Naive thymus-derived CD4-positive, alpha-beta T cell (primary cell): ENCODE measurements at regions of chr6 and their contacts with region 1.

Region 1: DNA sequence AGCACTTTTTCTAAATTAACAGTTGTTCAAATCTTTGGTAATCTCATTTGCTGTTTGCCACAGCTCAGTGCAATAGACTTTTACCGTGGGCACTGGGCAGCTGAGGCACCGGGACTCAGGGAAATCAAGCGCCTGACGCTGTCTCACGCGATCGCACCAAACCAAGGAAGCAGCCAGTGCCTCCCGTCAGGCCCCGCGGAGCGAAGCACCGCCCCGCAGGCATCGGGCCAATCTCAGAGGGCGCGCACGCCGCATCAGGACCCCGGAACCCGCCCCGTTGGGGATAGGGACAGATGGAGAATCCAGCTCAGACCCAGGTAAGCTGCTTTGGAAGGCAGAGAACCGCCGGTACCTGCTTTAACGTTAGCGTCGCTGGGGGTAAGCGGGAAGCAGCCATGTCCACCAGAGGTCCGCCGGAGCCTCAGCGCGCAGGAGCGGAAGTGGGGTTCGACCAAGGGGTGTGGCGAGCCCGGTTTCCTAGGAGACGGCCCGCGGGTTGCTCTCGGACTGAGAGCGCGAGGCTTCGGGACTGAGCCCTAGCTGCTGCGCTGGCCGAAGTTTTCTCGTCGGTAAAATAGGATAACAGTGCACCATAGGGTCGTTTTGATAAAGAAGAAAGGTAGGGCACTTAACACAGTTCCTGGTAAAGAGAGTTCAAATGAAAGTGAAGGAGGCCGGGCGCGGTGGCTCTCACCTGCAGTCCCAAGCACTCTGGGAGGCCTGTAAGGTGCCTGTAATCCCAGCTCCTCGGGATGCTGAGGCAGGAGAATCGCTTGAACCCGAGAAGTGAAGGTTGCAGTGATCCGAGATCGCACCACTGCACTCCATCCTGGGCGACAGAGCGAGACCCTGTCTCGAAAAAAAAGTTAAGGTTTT is at the start of gene LYRM2:
- DNase-seq: peak; percentile 85 to 93 (median 91)
- ATAC-seq: peak; percentile 97
- H3K4me3 ChIP-seq: peak within 1 kb of the TSS; percentile 99
- H3K4me3 Mint-ChIP-seq: peak within 1 kb of the TSS; percentile 90 to 98 (median 94)
- H3K27ac ChIP-seq: peak within 1 kb of the TSS; percentile 91
- H3K27ac Mint-ChIP-seq: peak within 1 kb of the TSS; percentile 96 to 99 (median 99)
- H3K4me1 ChIP-seq: peaks cover 9 to 15% of the 10 kb centered on the region in 2 donors
- H3K4me1 Mint-ChIP-seq: peaks cover 6 to 45% (median 27%) of the 10 kb centered on the region in 7 donors
- H3K27me3 ChIP-seq: no peaks in the 10 kb centered on the region
- H3K27me3 Mint-ChIP-seq: peaks cover 0 to 3% (median 0%) of the 10 kb centered on the region in 5 donors
- total RNA-seq, gene LYRM2: 18.1 to 40.7 (median 32.0) TPM

Region 2: DNA sequence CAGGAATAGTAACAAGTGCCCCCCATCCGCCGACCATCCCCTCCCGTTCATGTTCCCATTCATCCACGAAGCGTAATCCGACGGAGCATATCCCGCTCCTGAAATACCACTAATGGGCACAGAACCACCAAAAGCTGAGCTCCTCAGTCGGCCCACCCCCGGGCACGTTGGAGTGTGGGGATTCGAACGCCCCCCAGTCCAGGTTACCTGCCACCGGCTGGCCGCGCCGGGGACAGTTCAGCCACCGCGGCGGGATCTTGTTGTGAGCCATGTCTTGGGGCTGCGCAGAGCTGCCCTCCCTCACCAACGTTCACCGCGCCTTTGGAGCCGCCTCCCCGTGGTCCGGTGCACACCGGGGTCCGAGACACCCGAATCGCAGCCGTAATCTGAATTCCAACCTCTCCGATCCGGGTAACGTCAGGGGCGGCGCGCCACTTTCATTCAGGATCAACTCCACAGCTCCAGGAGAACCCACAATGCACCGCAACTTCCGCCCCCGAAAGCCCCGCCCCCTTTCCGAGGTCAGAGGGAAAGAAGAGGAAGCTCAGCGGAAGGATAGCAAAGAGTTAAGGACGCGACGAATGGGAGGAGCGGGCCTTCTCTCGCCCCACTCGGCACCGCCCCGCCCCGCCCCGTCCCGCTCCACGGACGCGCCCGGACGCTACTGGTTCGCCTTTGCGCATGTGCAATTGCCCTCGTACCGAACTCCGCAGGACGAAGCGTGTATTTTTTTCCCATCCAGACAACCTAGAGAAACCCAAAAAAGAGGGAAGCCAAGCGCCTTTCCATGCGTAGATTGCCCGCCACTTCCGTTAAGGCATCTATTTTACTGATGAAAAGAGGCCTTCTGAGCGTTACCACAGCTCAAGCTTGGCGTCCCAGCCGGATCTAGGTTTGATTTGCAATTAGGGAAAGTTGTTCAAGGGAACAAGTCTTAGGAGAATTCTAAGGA is 675.1 kb before region 1 on chr6 and contains the start of gene RNGTT:
- CTCF ChIA-PET with region 1: no interaction called
- POLR2A ChIA-PET with region 1: interaction called, 5 read pairs
- intact Hi-C with region 1: loop called (anchors 1 kb)
- DNase-seq: peak; percentile 89 to 98 (median 95)
- ATAC-seq: peak; percentile 100
- H3K4me3 ChIP-seq: peak within 1 kb of the TSS; percentile 82
- H3K4me3 Mint-ChIP-seq: peak within 1 kb of the TSS; percentile 91 to 99 (median 98)
- H3K27ac ChIP-seq: peak within 1 kb of the TSS; percentile 82
- H3K27ac Mint-ChIP-seq: peak within 1 kb of the TSS; percentile 85 to 97 (median 94)
- H3K4me1 ChIP-seq: peaks cover 9 to 18% of the 10 kb centered on the region in 2 donors
- H3K4me1 Mint-ChIP-seq: peaks cover 25 to 57% (median 52%) of the 10 kb centered on the region in 7 donors
- H3K27me3 ChIP-seq: no peaks in the 10 kb centered on the region
- H3K27me3 Mint-ChIP-seq: peaks cover 0 to 2% (median 0%) of the 10 kb centered on the region in 5 donors
- total RNA-seq, gene RNGTT: 15.4 to 26.5 (median 20.8) TPM

Region 3: DNA sequence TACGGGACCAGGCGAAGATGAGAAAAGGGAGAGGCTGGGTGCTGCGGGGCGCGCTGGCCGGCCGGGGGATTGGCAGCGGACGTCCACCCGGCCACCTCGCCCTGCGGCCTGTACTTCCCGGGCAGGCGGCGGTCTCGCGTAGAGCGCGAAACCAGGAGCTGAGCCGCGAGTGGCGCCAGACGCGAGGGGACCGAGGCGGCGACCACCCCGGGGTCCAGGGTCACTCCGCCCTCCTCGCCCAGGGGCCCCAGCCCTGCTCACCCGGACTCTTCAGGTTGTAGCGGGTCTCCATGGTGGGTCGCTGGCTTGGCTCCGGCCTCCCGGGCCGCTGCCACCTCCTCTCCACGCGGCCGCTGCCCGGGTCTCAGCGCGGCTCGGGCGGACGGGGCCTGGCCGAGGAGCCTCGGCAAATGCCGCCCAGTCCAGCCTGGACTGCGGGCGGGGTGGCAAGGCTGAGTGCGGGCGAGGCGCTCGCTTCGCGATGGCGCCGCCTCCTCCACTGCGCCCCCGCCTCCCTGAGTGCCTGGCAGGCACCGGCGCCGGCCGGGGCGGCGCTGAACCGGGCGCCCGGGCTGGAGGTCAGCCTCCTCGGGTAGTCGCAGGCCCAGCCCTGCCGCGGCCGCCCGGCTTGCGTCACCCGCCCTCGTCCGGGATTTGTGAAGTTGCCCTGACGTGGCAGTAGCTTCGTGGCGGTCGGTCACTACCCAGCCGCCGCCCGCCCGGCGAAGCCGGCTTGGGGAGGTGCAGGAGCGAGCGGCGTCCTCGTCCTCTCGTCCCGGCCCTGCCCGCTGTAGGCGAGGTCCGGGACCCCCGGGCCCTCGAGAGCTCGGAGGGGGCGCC is 286.1 kb before region 1 on chr6 and contains the start of gene UBE2J1:
- CTCF ChIA-PET with region 1: no interaction called
- POLR2A ChIA-PET with region 1: interaction called, 3 read pairs
- intact Hi-C with region 1: loop called (anchors 1 kb)
- DNase-seq: peak; percentile 34 to 87 (median 61)
- ATAC-seq: peak; percentile 89
- H3K4me3 ChIP-seq: peak within 1 kb of the TSS; percentile 67
- H3K4me3 Mint-ChIP-seq: peak within 1 kb of the TSS; percentile 96 to 100 (median 98)
- H3K27ac ChIP-seq: peak within 1 kb of the TSS; percentile 88
- H3K27ac Mint-ChIP-seq: peak within 1 kb of the TSS; percentile 95 to 98 (median 97)
- H3K4me1 ChIP-seq: peaks cover 27 to 30% of the 10 kb centered on the region in 2 donors
- H3K4me1 Mint-ChIP-seq: peaks cover 44 to 81% (median 72%) of the 10 kb centered on the region in 7 donors
- H3K27me3 ChIP-seq: no peaks in the 10 kb centered on the region
- H3K27me3 Mint-ChIP-seq: no peaks in the 10 kb centered on the region
- total RNA-seq, gene UBE2J1: 18.8 to 47.7 (median 27.7) TPM

Region 4: DNA sequence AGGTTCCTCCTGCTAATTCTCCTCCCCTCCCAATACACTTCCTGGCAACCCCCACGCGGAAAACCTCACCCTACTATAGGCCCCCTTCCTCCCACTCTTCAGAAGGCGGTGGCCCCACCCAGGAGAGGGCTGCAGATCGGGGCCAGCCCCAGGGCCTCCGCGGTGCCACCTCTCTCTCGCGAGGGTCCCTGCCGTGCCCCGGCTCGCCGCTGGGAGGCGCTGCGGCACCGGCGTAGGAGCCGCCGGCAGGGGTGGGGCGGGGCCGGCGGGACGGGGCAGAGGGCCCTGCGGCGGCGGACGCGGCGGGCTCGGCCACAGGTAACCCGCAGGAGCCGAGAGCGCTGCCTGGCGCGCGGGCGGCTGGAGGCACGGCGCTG is 205.7 kb before region 1 on chr6 and contains the start of gene ANKRD6:
- CTCF ChIA-PET with region 1: interaction called, 5 read pairs
- POLR2A ChIA-PET with region 1: no interaction called
- intact Hi-C with region 1: loop called (anchors 1 kb)
- DNase-seq: peak; percentile 61 to 96 (median 81)
- ATAC-seq: peak; percentile 98
- H3K4me3 ChIP-seq: peak within 1 kb of the TSS; percentile 63
- H3K4me3 Mint-ChIP-seq: peak within 1 kb of the TSS; percentile 83 to 95 (median 90)
- H3K27ac ChIP-seq: peak within 1 kb of the TSS; percentile 46
- H3K27ac Mint-ChIP-seq: peak within 1 kb of the TSS; percentile 43 to 93 (median 82)
- H3K4me1 ChIP-seq: peaks cover 7 to 13% of the 10 kb centered on the region in 2 donors
- H3K4me1 Mint-ChIP-seq: peaks cover 9 to 36% (median 22%) of the 10 kb centered on the region in 7 donors
- H3K27me3 ChIP-seq: no peaks in the 10 kb centered on the region
- H3K27me3 Mint-ChIP-seq: peaks cover 0 to 58% (median 0%) of the 10 kb centered on the region in 5 donors
- total RNA-seq, gene ANKRD6: 3.1 to 6.6 (median 3.8) TPM

Region 5: GRCh38 chr6:89610149-89610642 is 28.4 kb before region 1 on chr6:
- CTCF ChIA-PET with region 1: interaction called, 8 read pairs
- POLR2A ChIA-PET with region 1: interaction called, 3 read pairs
- intact Hi-C with region 1: loop called in 1 of 2 experiments (anchors 1 kb)
- DNase-seq: peak; percentile 34 to 75 (median 65)
- ATAC-seq: peak; percentile 91
- H3K4me3 ChIP-seq: no peak overlapping the region
- H3K4me3 Mint-ChIP-seq: no peak overlapping the region
- H3K27ac ChIP-seq: no peak overlapping the region
- H3K27ac Mint-ChIP-seq: no peak overlapping the region
- H3K4me1 ChIP-seq: no peaks in the 10 kb centered on the region
- H3K4me1 Mint-ChIP-seq: peaks cover 0 to 17% (median 0%) of the 10 kb centered on the region in 7 donors
- H3K27me3 ChIP-seq: no peaks in the 10 kb centered on the region
- H3K27me3 Mint-ChIP-seq: no peaks in the 10 kb centered on the region

Region 6: DNA sequence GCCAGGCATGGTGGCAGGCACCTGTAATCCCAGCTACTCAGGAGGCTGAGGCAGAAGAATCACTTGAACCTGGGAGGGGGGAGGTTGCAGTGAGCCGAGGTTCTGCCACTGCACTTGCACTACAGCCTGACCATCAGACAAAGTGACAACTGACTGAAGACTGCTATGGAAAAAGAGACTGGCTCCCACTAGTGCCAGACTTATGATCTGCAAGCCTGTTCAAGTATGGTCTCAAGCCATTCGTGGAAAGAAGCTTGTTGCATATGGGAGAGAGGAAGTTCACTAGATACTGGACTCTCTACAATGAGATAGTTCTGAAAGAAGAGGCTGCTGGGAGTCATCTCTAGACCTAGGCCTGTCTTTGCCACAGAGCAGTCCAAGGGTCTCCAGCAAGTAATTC is 154.3 kb after region 1 on chr6:
- CTCF ChIA-PET with region 1: no interaction called
- POLR2A ChIA-PET with region 1: no interaction called
- intact Hi-C with region 1: no loop called
- DNase-seq: no peak
- ATAC-seq: peak; percentile 71
- H3K4me3 ChIP-seq: no peak overlapping the region
- H3K4me3 Mint-ChIP-seq: peak overlapping the region in 8 of 10 donors; percentile 1 to 79 (median 46)
- H3K27ac ChIP-seq: no peak overlapping the region
- H3K27ac Mint-ChIP-seq: peak overlapping the region in 3 of 9 donors; percentile 59 to 82 (median 65)
- H3K4me1 ChIP-seq: peaks cover 16 to 21% of the 10 kb centered on the region in 2 donors
- H3K4me1 Mint-ChIP-seq: peaks cover 27 to 33% (median 30%) of the 10 kb centered on the region in 7 donors
- H3K27me3 ChIP-seq: no peaks in the 10 kb centered on the region
- H3K27me3 Mint-ChIP-seq: no peaks in the 10 kb centered on the region

Region 7: DNA sequence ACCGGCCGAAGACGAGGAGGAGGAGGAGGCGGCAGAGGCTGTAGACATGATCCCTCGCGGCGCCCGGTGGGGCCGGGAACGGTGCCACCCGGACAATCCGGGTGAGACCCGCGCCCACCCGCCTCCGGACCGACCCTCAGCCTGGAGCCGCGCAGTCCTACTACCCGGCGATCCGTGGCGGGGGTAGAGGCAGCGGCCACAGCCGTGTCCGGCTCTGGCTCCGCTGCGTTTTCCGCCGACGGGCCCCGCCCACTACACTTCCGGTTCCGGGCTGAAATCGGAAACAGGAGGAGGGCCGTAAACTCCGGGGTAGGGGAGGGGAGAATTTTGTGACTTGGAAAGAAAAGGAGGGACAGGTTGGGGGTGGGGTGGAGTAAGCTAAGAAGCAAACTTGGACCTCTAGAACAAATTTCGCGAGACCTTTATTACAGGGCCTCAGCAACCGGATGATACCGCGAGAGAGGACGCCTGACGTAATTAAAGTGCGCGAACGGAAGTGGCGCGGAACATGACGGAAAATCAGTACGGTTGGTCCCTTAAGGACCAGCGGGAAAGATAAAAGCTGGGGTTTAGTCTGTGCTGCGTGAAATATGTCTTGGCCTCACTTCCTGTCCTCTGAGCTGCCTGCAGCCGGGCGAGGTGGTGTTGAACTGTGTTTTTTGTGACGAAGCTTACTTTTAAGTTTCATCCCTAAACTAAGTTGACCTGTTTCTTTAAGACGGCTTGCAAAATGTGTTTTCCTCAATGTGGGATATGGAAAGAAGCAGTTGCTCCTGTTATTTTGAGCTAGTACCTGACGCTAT is 948.5 kb after region 1 on chr6 and contains the start of gene MAP3K7:
- CTCF ChIA-PET with region 1: no interaction called
- POLR2A ChIA-PET with region 1: no interaction called
- intact Hi-C with region 1: loop called (anchors 1 kb)
- DNase-seq: peak; percentile 83 to 96 (median 93)
- ATAC-seq: peak; percentile 90
- H3K4me3 ChIP-seq: peak within 1 kb of the TSS; percentile 88
- H3K4me3 Mint-ChIP-seq: peak within 1 kb of the TSS; percentile 92 to 99 (median 96)
- H3K27ac ChIP-seq: peak within 1 kb of the TSS; percentile 93
- H3K27ac Mint-ChIP-seq: peak within 1 kb of the TSS; percentile 93 to 100 (median 99)
- H3K4me1 ChIP-seq: peaks cover 17 to 22% of the 10 kb centered on the region in 2 donors
- H3K4me1 Mint-ChIP-seq: peaks cover 24 to 49% (median 45%) of the 10 kb centered on the region in 7 donors
- H3K27me3 ChIP-seq: no peaks in the 10 kb centered on the region
- H3K27me3 Mint-ChIP-seq: peaks cover 5 to 36% (median 11%) of the 10 kb centered on the region in 5 donors
- total RNA-seq, gene MAP3K7: 16.1 to 38.5 (median 29.9) TPM